ENCODE measurements at regions of chr1 and their contacts with region 1.

Region 1: GRCh38 chr1:10989095-10989494 is 23.4 kb upstream of the TARDBP start:
- DNase-seq: no peak
- H3K4me3 ChIP-seq: no peak overlapping the region
- H3K27ac ChIP-seq: no peak overlapping the region
- H3K4me1 ChIP-seq: no peaks in the 10 kb centered on the region
- CTCF ChIP-seq: no peak

Region 2: DNA sequence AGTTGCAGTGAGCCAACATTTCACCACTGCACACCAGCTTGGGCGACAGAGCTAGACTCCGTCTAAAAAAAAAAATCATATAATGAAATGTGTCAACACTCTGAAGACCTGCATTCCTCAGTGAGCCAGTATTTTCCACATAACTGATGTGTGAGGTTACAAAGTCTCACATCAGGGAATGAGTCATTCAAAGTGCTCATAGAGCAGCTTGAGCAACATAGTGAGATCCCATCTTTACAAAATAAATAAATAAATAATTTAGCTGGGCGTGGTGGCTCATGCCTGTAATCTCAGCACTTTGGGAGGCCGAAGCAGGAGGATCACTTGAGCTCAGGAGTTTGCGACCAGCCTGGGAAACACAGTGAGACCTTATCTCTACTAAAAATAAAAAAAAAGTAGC is 258.1 kb before region 1 on chr1:
- CTCF ChIA-PET with region 1: no interaction called
- POLR2A ChIA-PET with region 1: no interaction called
- intact Hi-C with region 1: no loop called
- DNase-seq: no peak
- H3K4me3 ChIP-seq: no peak overlapping the region
- H3K27ac ChIP-seq: no peak overlapping the region
- H3K4me1 ChIP-seq: no peaks in the 10 kb centered on the region
- CTCF ChIP-seq: no peak

Region 3: DNA sequence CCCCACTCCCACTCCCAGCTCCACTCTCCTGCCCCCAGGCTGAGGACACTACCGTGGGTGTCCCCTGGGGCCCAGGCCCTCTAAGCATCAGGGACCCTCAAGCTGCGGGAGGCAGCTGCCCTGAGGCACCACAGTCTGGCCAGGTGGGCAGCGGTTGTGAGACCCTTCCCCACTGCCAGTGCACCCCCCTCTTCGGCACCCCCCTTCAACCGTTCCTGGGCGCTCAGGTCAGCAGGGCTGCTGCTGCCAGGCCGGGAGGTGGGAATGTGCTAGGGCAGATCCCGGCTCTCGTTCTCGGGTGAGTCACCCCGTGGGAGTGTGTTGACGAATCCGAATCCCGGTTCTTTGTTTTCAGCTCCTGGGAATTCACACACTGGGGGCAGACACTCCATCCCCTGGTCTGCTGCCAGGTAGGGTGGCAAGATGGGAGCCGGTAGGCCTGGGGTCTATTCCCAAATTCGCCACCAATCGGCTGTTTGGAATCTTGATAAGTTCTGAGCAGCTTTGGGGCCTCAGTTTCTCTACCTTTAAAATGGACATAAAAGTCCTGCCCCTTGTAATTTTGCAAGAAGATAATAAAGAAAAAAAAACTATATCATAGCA is 164.2 kb before region 1 on chr1:
- CTCF ChIA-PET with region 1: interaction called, 29 read pairs
- POLR2A ChIA-PET with region 1: no interaction called
- intact Hi-C with region 1: no loop called
- DNase-seq: no peak
- H3K4me3 ChIP-seq: no peak overlapping the region
- H3K27ac ChIP-seq: no peak overlapping the region
- H3K4me1 ChIP-seq: no peaks in the 10 kb centered on the region
- CTCF ChIP-seq: no peak